Heart left ventricle (tissue), 16 donors: ENCODE measurements at regions of chr22 and their contacts with region 1.

Region 1: DNA sequence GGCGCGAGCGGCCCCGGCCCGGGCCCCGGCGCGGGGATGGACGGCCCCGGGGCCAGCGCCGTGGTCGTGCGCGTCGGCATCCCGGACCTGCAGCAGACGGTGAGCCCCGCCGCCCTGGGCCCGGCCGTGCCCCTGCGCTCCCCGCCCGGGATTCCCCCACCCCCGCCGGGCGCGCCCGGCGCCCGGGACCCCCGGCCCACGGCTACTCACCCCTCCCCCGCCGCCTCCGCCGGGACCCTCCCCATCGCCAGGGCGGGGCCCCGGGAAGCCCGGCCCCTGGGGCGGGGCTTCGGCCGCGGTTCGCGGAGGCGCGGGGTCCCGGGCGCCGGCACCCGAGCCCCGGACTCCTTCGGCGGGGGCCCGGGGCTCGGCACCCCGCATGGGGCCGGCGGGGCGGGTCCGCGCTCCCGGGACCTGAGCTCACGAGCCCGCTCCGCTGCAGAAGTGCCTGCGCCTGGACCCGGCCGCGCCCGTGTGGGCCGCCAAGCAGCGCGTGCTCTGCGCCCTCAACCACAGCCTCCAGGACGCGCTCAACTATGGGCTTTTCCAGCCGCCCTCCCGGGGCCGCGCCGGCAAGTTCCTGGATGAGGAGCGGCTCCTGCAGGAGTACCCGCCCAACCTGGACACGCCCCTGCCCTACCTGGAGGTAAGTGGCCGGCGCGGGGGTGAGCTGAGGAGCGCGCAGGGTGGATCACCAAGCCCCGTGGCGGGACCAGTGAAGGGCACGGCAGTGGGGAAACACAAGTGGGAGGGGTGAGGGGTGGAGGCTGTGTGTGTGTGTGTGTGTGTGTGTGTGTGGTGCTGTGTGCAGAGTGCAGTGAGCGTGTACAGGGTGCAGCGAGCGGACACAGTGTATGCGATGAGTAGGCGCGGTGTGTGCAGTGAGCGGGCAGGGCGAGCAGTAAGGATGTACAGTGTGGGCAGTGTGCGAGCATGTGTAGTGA is 2.3 kb downstream of the SHANK3 start:
- DNase-seq: no peak
- ATAC-seq: no peak
- H3K4me3 ChIP-seq: peak overlapping the region; percentile 42 to 75 (median 60)
- H3K27ac ChIP-seq: peak overlapping the region in 11 of 12 donors; percentile 32 to 80 (median 69)
- H3K4me1 ChIP-seq: peaks cover 0 to 59% (median 9%) of the 10 kb centered on the region in 12 donors
- H3K27me3 ChIP-seq: peaks cover 4 to 44% (median 20%) of the 10 kb centered on the region in 9 donors
- CTCF ChIP-seq: no peak
- POLR2A ChIP-seq: no peak

Region 2: DNA sequence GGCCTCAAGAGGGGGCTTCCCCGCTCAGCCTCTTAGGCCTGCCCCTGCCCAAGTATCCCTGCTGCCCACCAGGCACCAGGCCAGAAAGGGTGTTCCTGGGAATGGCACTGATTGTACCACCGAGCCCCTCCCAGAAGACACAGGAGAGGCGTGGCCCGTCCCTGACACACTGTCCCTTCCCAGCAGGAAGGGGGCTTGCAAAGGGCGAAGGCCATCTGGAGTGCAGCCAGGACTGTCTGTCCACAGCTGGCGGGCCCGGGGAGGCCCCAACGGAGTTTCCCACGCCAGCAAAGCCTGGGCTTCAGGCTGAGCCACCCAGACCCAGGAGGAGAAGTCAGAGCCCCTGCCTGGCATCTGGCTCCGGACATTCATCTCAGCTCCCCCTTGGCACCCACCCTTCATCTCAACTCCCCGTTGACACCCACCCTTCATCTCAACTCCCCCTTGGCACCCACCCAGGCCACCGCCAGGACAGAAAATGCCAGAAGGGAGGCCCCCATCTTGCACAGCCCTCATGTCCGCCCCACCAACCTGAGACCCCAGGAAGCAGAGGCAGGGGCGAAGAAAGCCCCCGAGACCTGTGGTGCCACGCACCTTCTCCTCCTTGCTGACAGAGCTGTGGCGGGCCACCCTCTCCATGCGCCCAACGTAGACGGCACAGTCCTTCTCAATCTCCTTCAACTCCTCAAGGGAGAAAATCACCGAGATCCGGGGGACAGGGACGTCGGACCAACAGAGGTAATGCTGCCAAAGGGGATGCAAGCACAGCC is 449.5 kb before region 1 on chr22:
- intact Hi-C with region 1: no loop called
- DNase-seq: no peak
- ATAC-seq: no peak
- H3K4me3 ChIP-seq: no peak overlapping the region
- H3K27ac ChIP-seq: no peak overlapping the region
- H3K4me1 ChIP-seq: no peaks in the 10 kb centered on the region
- H3K27me3 ChIP-seq: no peaks in the 10 kb centered on the region
- CTCF ChIP-seq: no peak
- POLR2A ChIP-seq: no peak

Region 3: DNA sequence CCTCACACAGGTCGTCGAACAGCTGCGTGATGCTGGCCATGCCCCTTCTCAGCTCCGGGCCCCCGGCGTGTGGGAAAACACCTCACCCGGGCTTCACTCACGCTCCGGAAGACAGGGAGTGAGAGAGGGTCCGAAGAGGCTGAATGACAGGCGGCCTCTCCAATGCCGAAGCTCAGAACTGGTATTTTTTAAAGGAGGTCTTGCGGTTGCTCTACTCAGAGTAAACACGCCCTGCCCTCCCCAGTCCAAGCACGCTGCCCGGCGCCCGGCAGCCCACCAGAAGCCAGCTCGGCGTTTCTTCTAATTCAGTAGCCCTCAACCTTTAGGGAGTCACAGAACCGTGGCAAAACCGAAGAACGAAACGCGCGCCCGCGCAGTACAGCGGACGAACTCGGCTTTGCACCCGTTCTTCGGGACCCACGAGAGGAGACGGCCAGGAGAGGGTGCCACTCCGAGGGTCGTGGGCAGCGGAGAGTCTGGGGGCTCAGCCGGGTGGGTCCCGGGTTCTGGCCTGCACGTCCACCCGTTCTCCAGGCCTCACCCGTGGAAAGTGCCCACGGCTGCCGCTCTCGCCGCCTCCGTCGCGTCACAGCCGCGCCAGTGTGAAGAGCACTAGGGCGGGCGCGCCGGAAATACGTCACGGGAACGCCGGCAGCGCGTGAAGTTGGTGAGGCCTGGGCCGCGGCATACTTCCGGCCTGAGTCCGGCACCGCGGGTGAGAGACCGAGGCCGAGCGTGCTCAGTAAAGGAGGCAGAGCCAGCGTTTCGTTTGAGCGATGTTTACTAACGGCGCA is 430.3 kb before region 1 on chr22 and contains the start of gene TUBGCP6:
- intact Hi-C with region 1: no loop called
- DNase-seq: peak; percentile 96 to 98 (median 96)
- ATAC-seq: peak; percentile 88 to 96 (median 93)
- H3K4me3 ChIP-seq: peak within 1 kb of the TSS; percentile 51 to 99 (median 88)
- H3K27ac ChIP-seq: peak within 1 kb of the TSS; percentile 72 to 96 (median 88)
- H3K4me1 ChIP-seq: peaks cover 13 to 62% (median 44%) of the 10 kb centered on the region in 12 donors
- H3K27me3 ChIP-seq: no peaks in the 10 kb centered on the region
- CTCF ChIP-seq: peak in 7 of 12 donors; percentile 6 to 39 (median 24)
- POLR2A ChIP-seq: peak in 1 of 2 donors; percentile 81
- total RNA-seq, gene TUBGCP6: 14.1 to 28.8 (median 18.1) TPM

Region 4: DNA sequence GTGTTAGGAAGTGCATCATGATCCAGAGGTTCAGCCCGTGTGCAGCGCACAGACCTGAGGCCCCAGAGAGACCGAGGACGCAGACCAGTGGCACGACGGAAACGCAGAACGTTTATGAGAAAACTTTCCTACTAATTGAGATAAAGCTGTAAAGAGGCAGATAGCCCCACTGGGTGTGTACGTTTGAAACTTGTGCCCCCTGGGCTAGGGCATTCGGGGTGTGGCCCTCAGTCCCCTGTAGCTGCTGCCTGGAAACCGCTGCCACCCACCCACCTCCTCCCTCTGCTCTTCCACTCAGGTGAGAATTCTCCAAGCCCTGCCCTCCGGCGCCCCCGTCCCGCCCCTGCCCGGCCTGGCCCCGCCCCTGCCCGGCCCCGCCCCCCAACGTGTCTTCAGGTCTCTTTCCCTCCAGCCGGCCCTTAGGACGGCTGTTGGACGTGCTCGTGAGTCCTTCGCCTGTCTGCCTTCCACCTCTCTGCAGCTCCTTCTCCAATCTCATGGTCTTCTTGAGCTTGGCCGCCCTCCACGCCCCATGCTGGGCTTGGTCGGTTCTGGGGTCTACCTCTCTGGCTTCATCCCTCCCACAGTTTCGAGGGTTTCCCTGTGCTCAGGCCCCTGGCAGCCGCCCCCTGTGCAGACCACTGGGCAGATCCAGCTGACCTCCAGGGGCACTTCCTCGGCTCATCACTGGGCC is 62.2 kb before region 1 on chr22:
- intact Hi-C with region 1: no loop called
- DNase-seq: no peak
- ATAC-seq: peak in 1 of 4 donors; percentile 22
- H3K4me3 ChIP-seq: no peak overlapping the region
- H3K27ac ChIP-seq: no peak overlapping the region
- H3K4me1 ChIP-seq: peaks cover 0 to 6% (median 0%) of the 10 kb centered on the region in 12 donors
- H3K27me3 ChIP-seq: peaks cover 0 to 4% (median 0%) of the 10 kb centered on the region in 9 donors
- CTCF ChIP-seq: no peak
- POLR2A ChIP-seq: no peak

Region 5: GRCh38 chr22:50627642-50628542 is 47.0 kb before region 1 on chr22 and contains the start of gene ARSA:
- intact Hi-C with region 1: loop called in 6 of 10 experiments (anchors 1 to 5 kb)
- DNase-seq: peak; percentile 87 to 94 (median 88)
- ATAC-seq: peak; percentile 77 to 93 (median 90)
- H3K4me3 ChIP-seq: peak within 1 kb of the TSS; percentile 61 to 92 (median 82)
- H3K27ac ChIP-seq: peak within 1 kb of the TSS; percentile 70 to 93 (median 87)
- H3K4me1 ChIP-seq: peaks cover 0 to 27% (median 17%) of the 10 kb centered on the region in 12 donors
- H3K27me3 ChIP-seq: no peaks in the 10 kb centered on the region
- CTCF ChIP-seq: peak in 11 of 12 donors; percentile 16 to 65 (median 49)
- POLR2A ChIP-seq: peak in 1 of 2 donors; percentile 74
- total RNA-seq, gene ARSA: 19.1 to 40.5 (median 27.2) TPM

Region 6: DNA sequence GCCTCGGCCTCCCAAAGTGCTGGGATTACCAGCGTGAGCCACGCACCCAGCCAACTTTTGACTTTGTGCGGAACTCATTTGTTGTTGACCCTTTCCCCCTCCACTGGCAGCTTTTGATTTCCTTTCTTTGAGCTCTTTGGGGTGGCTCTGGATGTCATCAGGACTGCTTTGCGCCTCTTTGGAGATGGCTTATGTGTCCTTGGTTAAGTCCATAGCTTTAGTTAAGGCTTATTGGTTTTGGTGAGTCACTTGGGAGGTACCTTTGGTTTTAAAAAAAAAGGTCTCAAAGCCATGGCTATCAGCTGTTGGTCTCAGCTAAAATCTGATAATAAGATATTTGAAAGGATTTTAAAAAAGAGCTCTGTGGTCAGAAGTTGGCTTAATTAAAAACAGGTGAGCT is 41.8 kb before region 1 on chr22:
- intact Hi-C with region 1: loop called in 6 of 10 experiments (anchors 2 to 5 kb)
- DNase-seq: no peak
- ATAC-seq: no peak
- H3K4me3 ChIP-seq: no peak overlapping the region
- H3K27ac ChIP-seq: no peak overlapping the region
- H3K4me1 ChIP-seq: peaks cover 0 to 12% (median 6%) of the 10 kb centered on the region in 12 donors
- H3K27me3 ChIP-seq: no peaks in the 10 kb centered on the region
- CTCF ChIP-seq: no peak
- POLR2A ChIP-seq: no peak

Region 7: GRCh38 chr22:50641696-50642607 is 32.9 kb before region 1 on chr22:
- intact Hi-C with region 1: loop called in 1 of 10 experiments (anchors 2 kb)
- DNase-seq: peak in 2 of 5 donors; percentile 40 to 42
- ATAC-seq: peak; percentile 61 to 87 (median 79)
- H3K4me3 ChIP-seq: peak overlapping the region in 4 of 12 donors; percentile 9 to 25 (median 22)
- H3K27ac ChIP-seq: peak overlapping the region; percentile 48 to 80 (median 66)
- H3K4me1 ChIP-seq: peaks cover 0 to 18% (median 14%) of the 10 kb centered on the region in 12 donors
- H3K27me3 ChIP-seq: peaks cover 0 to 31% (median 8%) of the 10 kb centered on the region in 9 donors
- CTCF ChIP-seq: peak; percentile 14 to 61 (median 42)
- POLR2A ChIP-seq: no peak

Region 8: DNA sequence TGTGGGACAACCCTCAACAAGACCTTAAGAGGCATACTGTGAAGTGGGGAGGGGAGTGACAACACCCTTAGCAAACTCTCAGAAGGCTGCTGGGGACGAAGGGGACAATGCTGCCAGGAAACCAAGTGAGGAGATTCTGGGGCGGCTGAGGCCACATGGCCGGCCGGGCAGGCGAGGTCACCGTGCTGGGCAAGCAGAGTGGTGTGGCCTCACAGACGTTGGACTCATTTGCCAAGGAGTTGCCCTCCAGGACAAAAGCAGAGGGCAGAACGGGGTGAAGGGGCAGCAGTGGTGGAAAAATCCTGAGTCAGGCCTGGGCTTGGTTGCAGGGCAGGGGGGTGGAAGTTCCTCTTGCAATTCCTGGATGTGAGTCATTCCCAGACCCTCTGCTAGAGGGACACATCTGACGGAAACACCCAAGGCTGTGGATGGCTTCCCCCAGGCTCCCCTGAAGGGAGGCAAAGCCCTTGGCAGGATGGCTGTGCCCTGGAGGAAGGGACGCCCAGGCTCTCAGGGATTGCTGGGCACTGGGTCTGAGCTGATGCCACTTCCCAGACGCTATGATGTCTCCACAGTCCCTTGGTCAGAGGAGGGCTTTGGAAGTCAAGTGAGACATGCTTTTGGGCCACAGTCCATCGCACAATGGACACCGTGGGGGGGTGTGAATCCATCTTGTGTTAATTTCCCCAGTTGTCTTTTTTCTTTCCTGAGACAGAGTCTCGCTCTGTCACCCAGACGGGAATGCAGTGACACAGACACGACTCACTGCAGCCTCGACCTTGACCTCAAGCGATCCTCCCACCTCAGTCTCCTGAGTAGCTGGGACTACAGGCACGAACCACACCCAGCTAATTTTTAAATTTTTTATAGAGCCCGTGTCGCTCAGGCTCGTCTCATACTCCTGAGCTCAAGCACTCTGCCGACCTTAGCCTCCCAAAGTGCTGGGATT is 18.5 kb before region 1 on chr22:
- intact Hi-C with region 1: loop called in 1 of 10 experiments (anchors 1 kb)
- DNase-seq: peak in 4 of 5 donors; percentile 38 to 80 (median 74)
- ATAC-seq: peak; percentile 71 to 93 (median 85)
- H3K4me3 ChIP-seq: peak overlapping the region in 1 of 12 donors; percentile 32
- H3K27ac ChIP-seq: peak overlapping the region; percentile 50 to 92 (median 76)
- H3K4me1 ChIP-seq: peaks cover 0 to 40% (median 11%) of the 10 kb centered on the region in 12 donors
- H3K27me3 ChIP-seq: peaks cover 0 to 13% (median 0%) of the 10 kb centered on the region in 9 donors
- CTCF ChIP-seq: no peak
- POLR2A ChIP-seq: no peak

Region 9: DNA sequence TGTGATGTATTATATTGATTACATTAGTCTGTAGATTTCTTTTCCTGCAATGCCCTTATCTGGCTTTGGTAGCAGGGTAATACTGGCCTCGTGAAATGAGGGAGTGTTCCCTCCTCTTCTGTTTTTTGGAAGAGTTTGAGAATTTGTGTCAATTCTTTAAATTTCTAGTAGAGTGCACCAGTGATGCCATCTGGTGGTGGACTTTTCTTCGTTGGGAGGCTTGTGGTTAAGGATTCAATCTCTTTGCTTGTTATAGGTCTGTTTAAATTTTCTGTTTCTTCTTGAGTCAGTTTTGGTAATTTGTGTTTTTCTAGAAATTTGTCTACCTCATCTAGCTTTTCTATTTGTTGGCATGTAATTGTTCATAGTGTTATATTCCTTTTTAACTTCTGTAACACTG is 16.6 kb after region 1 on chr22:
- intact Hi-C with region 1: no loop called
- DNase-seq: no peak
- ATAC-seq: no peak
- H3K4me3 ChIP-seq: no peak overlapping the region
- H3K27ac ChIP-seq: no peak overlapping the region
- H3K4me1 ChIP-seq: peaks cover 2 to 64% (median 17%) of the 10 kb centered on the region in 12 donors
- H3K27me3 ChIP-seq: peaks cover 0 to 13% (median 0%) of the 10 kb centered on the region in 9 donors
- CTCF ChIP-seq: peak; percentile 7 to 51 (median 30)
- POLR2A ChIP-seq: no peak

Region 10: DNA sequence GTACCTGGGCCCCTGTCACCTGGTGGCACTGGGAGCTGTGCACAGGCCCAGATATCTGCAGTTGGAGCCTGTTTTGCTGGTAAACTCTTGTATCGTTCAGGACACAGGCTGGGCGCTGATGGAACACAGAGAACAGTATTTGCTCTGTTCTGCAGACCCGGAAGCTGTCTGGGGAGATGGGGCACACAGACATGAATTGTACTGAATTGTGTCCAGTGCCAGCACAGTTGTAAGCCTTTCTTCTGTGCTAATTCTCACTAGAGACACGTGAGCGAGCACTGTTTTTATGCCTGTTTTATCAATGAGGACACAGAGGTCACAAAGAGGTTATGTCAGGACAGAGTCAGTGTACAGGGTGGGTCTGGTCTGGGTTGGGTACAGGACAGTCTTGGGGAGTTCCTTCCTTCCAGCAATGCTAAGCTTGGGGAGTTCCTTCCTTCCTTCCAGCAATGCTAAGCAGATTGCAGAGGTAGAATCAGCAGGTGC is 38.7 kb after region 1 on chr22:
- intact Hi-C with region 1: loop called in 2 of 10 experiments (anchors 5 kb)
- DNase-seq: peak in 3 of 5 donors; percentile 11 to 44 (median 28)
- ATAC-seq: peak; percentile 66 to 76 (median 67)
- H3K4me3 ChIP-seq: no peak overlapping the region
- H3K27ac ChIP-seq: peak overlapping the region in 5 of 12 donors; percentile 8 to 68 (median 31)
- H3K4me1 ChIP-seq: peaks cover 0 to 55% (median 27%) of the 10 kb centered on the region in 12 donors
- H3K27me3 ChIP-seq: no peaks in the 10 kb centered on the region
- CTCF ChIP-seq: no peak
- POLR2A ChIP-seq: no peak